Calu3 (cell line): ENCODE measurements at regions of chr2 and their contacts with region 1.

Region 1: DNA sequence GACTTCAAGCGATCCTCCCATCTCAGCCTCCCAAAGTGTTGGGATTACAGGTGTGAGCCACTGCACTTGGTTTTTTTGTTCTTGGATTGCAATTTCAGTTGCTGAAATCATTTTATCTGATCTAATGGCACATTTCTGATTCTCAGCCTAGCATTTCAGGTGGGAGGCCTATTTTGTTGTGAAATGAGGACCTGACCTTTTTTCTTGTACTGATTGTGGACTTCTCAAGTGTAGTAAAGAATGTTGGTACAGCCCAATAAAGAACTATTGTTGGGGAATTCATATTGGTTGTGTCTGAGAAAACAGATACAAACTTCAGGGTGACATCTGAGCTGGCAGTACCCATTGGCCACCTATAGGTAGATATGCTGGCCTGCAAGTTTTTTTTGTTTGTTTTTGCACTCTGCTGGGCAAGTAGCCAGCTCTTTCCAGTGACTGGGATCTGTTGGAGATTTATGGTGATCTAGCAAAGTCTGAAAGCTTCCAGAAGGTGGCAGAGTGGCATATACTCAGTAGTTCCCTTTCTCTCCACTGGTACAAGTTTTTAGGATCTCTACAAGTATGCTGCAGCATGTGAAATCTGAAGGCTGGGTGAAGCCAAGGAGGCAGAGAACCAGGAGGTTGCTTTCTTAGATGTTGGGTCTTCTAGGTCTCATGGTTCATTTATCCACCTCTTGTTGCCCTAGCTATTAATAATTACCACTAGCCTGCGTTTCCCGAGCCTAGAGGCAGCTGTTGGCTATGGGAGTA is 9.2 kb downstream of the COPS7B start:
- DNase-seq: peak; percentile 81
- H3K4me3 Mint-ChIP-seq: no peak overlapping the region
- H3K27ac Mint-ChIP-seq: no peak overlapping the region
- H3K4me1 Mint-ChIP-seq: no peaks in the 10 kb centered on the region
- H3K27me3 Mint-ChIP-seq: no peaks in the 10 kb centered on the region
- CTCF ChIP-seq: peak; percentile 59

Region 2: GRCh38 chr2:231807020-231807419 is 11.6 kb after region 1 on chr2:
- CTCF ChIA-PET with region 1: interaction called, 11 read pairs
- intact Hi-C with region 1: no loop called
- DNase-seq: no peak
- H3K4me3 Mint-ChIP-seq: no peak overlapping the region
- H3K27ac Mint-ChIP-seq: no peak overlapping the region
- H3K4me1 Mint-ChIP-seq: no peaks in the 10 kb centered on the region
- H3K27me3 Mint-ChIP-seq: no peaks in the 10 kb centered on the region
- CTCF ChIP-seq: no peak

Region 3: GRCh38 chr2:231861532-231861931 is 66.1 kb after region 1 on chr2:
- CTCF ChIA-PET with region 1: no interaction called
- intact Hi-C with region 1: no loop called
- DNase-seq: no peak
- H3K4me3 Mint-ChIP-seq: no peak overlapping the region
- H3K27ac Mint-ChIP-seq: no peak overlapping the region
- H3K4me1 Mint-ChIP-seq: no peaks in the 10 kb centered on the region
- H3K27me3 Mint-ChIP-seq: peaks cover 61% of the 10 kb centered on the region
- CTCF ChIP-seq: no peak